Panc1 (cell line): ENCODE measurements at regions of chr7 and their contacts with region 1.

Region 1: DNA sequence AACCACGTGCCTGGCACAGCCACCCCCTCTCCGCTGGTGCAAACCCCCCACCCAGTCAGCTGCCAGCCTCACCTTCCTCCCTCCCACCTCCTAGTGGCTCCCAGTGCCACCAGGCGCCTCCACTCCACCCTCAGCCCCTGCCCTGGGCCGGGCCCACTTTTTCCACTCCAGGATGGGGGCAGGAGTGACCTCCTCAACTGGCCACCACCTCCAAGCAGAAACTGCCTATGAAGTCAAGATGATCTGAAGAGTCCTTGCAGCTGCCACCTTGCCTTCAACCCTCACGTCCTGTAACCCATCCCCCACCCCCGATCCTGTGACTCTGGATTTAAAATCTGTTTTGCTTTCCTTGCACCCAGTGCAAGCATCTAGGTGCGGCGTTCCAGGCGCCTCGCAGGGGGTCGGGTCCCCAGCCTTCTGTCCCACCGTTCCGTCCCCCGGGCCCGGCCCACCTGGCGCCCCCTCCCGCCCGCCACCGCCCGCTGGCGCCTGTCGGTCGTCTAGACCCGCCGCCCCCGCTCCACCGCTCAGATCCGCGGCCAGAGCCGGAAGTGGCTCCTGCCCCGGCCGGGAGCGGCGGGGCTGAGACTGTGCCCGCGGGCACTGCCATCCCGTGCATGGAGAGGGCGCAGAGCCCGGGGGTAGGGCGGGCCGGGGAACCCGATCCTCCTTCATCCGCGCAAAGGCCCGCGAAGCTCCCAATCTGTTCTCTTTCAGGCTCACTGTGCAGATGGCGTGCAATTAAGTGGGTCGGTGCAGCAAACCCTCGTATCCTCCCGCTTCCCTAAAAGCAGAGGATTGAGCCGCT is 51.2 kb upstream of the GTF2I start:
- DNase-seq: no peak
- ATAC-seq: peak; percentile 89
- H3K4me3 ChIP-seq: peak overlapping the region; percentile 23 to 51
- H3K27ac ChIP-seq: peak overlapping the region; percentile 57
- H3K4me1 ChIP-seq: peaks cover 10% of the 10 kb centered on the region
- H3K27me3 ChIP-seq: no peaks in the 10 kb centered on the region
- CTCF ChIP-seq: no peak

Region 2: DNA sequence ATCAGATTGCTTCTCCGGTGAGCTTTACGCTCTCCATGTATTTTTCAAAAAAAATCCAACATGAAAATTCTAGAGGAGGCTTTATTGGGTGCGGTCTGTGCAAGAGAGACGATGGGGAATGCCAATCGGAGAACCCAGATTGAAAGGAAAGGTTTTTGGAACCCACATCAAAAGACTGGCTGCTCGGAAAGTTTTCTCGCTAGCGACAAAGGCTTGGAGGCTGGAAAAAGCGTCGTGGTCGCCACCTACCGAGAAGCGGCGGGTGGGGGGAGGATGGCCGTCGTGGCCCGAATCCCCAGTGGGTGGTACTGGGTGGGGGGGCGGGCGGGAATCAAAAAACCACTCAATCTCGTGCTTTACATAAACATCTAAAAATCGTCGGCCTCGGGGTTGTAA is 50.1 kb after region 1 on chr7:
- CTCF ChIA-PET with region 1: no interaction called
- POLR2A ChIA-PET with region 1: interaction called, 11 read pairs
- in situ Hi-C with region 1: no loop called
- intact Hi-C with region 1: no loop called
- DNase-seq: no peak
- ATAC-seq: no peak
- H3K4me3 ChIP-seq: peak overlapping the region; percentile 69 to 88
- H3K27ac ChIP-seq: peak overlapping the region; percentile 99
- H3K4me1 ChIP-seq: peaks cover 30% of the 10 kb centered on the region
- H3K27me3 ChIP-seq: no peaks in the 10 kb centered on the region
- CTCF ChIP-seq: no peak